Psoas muscle (tissue), 8 donors: ENCODE measurements at regions of chr11 and their contacts with region 1.

Region 1: GRCh38 chr11:77187776-77188632 is 60.0 kb downstream of the MYO7A start:
- DNase-seq: peak; percentile 82 to 89
- ATAC-seq: peak; percentile 87 to 96 (median 92)
- H3K4me3 ChIP-seq: no peak overlapping the region
- H3K27ac ChIP-seq: no peak overlapping the region
- H3K4me1 ChIP-seq: no peaks in the 10 kb centered on the region
- H3K27me3 ChIP-seq: no peaks in the 10 kb centered on the region
- CTCF ChIP-seq: peak; percentile 91

Region 2: GRCh38 chr11:77047007-77047927 is 140.7 kb before region 1 on chr11:
- intact Hi-C with region 1: loop called (anchors 5 to 10 kb)
- DNase-seq: peak in 1 of 2 donors; percentile 45
- ATAC-seq: peak; percentile 87 to 97 (median 94)
- H3K4me3 ChIP-seq: peak overlapping the region; percentile 56
- H3K27ac ChIP-seq: no peak overlapping the region
- H3K4me1 ChIP-seq: no peaks in the 10 kb centered on the region
- H3K27me3 ChIP-seq: peaks cover 0 to 31% (median 3%) of the 10 kb centered on the region in 3 donors
- CTCF ChIP-seq: peak; percentile 72

Region 3: DNA sequence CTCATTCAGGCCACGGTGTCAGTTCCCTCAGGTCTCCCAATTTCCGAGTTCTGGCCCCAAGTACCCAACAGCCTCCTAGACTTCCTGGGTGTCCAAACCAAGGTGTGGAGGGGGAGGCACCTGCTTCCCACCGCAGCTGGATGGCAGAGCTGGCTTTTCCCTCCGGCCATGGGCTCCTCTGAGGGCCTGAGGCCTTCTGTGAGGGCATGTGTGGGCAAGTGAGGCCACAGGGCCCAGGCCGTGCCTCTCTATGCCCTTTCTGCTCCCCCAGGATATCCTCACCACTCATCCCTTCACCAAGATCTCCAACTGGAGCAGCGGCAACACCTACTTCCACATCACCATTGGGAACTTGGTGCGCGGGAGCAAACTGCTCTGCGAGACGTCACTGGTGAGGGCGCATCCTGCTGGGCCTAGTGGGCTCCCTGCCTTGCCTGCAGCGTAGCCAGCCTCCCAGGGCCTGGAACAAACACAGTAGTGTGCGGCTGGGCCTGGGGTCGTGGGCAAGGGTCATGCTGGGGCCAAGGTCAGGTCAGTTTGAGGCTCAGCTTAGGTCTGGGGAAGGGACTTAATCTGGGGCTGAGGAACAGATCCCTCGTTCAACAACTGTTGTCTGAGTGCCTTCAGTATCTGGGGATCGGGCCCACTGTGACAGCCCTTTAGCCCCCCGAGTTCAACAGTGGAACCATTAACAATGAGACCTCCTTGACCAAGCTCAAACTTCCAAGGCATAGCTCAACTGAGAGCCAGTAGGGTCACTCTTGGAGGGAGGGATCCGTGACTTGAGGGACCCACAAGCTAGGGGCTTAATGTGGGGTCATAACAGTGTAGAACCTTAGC is 25.8 kb after region 1 on chr11:
- intact Hi-C with region 1: no loop called
- DNase-seq: no peak
- ATAC-seq: no peak
- H3K4me3 ChIP-seq: no peak overlapping the region
- H3K27ac ChIP-seq: no peak overlapping the region
- H3K4me1 ChIP-seq: no peaks in the 10 kb centered on the region
- H3K27me3 ChIP-seq: no peaks in the 10 kb centered on the region
- CTCF ChIP-seq: no peak